Activated CD4-positive, alpha-beta T cell treated with anti-CD3 and anti-CD28 coated beads for 36 hours (primary cell): ENCODE measurements at regions of chr7 and their contacts with region 1.

Region 1: GRCh38 chr7:73738612-73739374 is at the start of gene ABHD11:
- DNase-seq: peak; percentile 99
- ATAC-seq: peak; percentile 86
- H3K4me3 Mint-ChIP-seq: peak within 1 kb of the TSS; percentile 91
- H3K27ac Mint-ChIP-seq: peak within 1 kb of the TSS; percentile 93
- H3K4me1 Mint-ChIP-seq: peaks cover 19% of the 10 kb centered on the region
- H3K27me3 Mint-ChIP-seq: no peaks in the 10 kb centered on the region
- total RNA-seq, gene ABHD11: 14.4 to 17.8 TPM

Region 2: GRCh38 chr7:73328696-73329095 is 410.1 kb before region 1 on chr7:
- CTCF ChIA-PET with region 1: no interaction called
- POLR2A ChIA-PET with region 1: no interaction called
- intact Hi-C with region 1: loop called in 1 of 2 experiments (anchors 1 kb)
- DNase-seq: no peak
- ATAC-seq: no peak
- H3K4me3 Mint-ChIP-seq: no peak overlapping the region
- H3K27ac Mint-ChIP-seq: no peak overlapping the region
- H3K4me1 Mint-ChIP-seq: peaks cover 6% of the 10 kb centered on the region
- H3K27me3 Mint-ChIP-seq: no peaks in the 10 kb centered on the region

Region 3: GRCh38 chr7:73578342-73579127 is 160.3 kb before region 1 on chr7 and contains the start of gene TBL2:
- CTCF ChIA-PET with region 1: interaction called, 3 read pairs
- POLR2A ChIA-PET with region 1: interaction called, 5 read pairs
- intact Hi-C with region 1: loop called (anchors 1 kb)
- DNase-seq: peak; percentile 100
- ATAC-seq: peak; percentile 92
- H3K4me3 Mint-ChIP-seq: peak within 1 kb of the TSS; percentile 98
- H3K27ac Mint-ChIP-seq: peak within 1 kb of the TSS; percentile 98
- H3K4me1 Mint-ChIP-seq: peaks cover 26% of the 10 kb centered on the region
- H3K27me3 Mint-ChIP-seq: no peaks in the 10 kb centered on the region
- total RNA-seq, gene TBL2: 30.6 to 34.7 TPM

Region 4: DNA sequence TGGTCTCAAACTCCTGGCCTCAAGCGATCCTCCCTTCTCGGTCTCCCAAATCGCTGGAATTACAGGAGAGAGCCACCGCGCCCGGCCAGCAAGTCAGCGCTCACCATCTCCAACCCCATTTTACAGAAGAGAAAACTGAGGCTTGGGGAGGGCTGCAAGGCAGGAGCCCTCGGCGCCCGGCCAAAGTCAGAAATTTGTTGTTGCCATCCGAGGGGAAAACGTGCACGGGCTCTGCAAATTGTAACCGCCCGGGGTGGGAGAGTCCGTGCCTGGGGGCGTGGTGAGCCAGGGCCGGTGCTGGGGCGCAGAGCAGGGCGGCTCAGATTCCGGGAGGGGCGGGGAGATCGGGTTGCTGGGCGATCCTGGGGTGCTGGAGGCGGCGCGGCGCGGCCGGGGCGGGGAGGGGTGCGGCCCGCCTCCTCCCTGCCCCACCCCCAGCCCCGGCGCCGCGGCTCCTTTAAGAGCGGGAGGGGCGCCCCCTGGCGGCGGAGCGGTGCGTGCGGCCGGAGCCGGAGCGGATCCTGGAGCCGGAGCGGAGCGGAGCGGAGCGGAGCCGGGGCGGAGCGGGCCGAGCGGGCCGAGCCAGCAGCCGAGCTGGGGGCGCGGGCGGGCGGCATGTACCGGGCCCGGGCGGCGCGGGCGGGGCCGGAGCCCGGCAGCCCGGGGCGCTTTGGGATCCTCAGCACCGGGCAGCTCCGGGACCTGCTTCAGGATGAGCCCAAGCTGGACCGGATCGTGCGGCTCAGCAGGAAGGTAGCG is 71.3 kb before region 1 on chr7 and contains the start of gene VPS37D:
- CTCF ChIA-PET with region 1: interaction called, 3 read pairs
- POLR2A ChIA-PET with region 1: no interaction called
- intact Hi-C with region 1: loop called in 1 of 2 experiments (anchors 1 kb)
- DNase-seq: peak; percentile 96
- ATAC-seq: peak; percentile 94
- H3K4me3 Mint-ChIP-seq: peak within 1 kb of the TSS; percentile 57
- H3K27ac Mint-ChIP-seq: no peak within 1 kb of the TSS
- H3K4me1 Mint-ChIP-seq: peaks cover 5% of the 10 kb centered on the region
- H3K27me3 Mint-ChIP-seq: peaks cover 40% of the 10 kb centered on the region
- total RNA-seq, gene VPS37D: 0.35 to 0.39 TPM

Region 5: GRCh38 chr7:73842247-73842895 is 103.6 kb after region 1 on chr7 and contains the start of gene METTL27:
- CTCF ChIA-PET with region 1: no interaction called
- POLR2A ChIA-PET with region 1: no interaction called
- intact Hi-C with region 1: loop called in 1 of 2 experiments (anchors 1 kb)
- DNase-seq: peak; percentile 96
- ATAC-seq: peak; percentile 100
- H3K4me3 Mint-ChIP-seq: peak within 1 kb of the TSS; percentile 75
- H3K27ac Mint-ChIP-seq: peak within 1 kb of the TSS; percentile 69
- H3K4me1 Mint-ChIP-seq: peaks cover 7% of the 10 kb centered on the region
- H3K27me3 Mint-ChIP-seq: no peaks in the 10 kb centered on the region
- total RNA-seq, gene METTL27: 2.1 to 2.2 TPM

Region 6: DNA sequence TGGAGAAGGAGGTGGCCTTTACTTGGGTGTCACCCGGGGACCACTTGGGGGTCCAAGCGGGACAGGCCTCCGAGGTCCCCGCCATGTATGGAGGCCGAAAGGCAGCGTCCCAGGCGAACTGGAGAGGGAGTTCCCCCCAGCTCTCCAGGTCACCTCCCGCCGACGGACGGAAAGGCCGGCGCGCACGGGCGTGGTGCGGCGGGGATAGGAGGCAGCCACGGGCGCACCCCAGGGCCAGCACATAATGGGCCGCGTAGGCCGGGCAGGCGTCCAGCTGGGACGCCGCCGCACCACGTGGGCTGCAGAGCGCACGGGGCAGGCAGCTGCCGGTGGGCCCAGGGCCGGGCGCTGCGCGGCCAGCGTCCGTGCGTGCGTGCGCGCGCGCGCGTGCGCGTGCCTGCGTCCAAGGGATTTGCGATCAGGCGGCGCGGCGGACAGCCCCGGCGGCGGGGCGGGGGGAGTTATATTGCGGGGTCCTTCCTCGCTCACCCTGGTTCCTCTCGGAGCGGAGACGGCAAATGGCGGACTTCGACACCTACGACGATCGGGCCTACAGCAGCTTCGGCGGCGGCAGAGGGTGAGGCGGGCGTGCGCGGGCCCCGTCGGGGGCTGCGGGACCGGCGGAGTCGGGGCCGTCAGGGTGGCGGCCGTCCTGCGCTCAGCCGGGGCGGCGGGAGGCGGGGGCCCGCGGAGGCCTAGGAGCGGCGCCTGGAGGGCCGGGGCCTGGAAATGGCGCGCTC is 435.2 kb after region 1 on chr7 and contains the start of gene EIF4H:
- CTCF ChIA-PET with region 1: no interaction called
- POLR2A ChIA-PET with region 1: no interaction called
- intact Hi-C with region 1: loop called in 1 of 2 experiments (anchors 10 kb)
- DNase-seq: peak; percentile 97
- ATAC-seq: peak; percentile 75
- H3K4me3 Mint-ChIP-seq: peak within 1 kb of the TSS; percentile 94
- H3K27ac Mint-ChIP-seq: peak within 1 kb of the TSS; percentile 94
- H3K4me1 Mint-ChIP-seq: peaks cover 41% of the 10 kb centered on the region
- H3K27me3 Mint-ChIP-seq: no peaks in the 10 kb centered on the region
- total RNA-seq, gene EIF4H: 441 to 496 TPM